Spleen (tissue), 13 donors: ENCODE measurements at regions of chrX and their contacts with region 1.

Region 1: GRCh38 chrX:133670383-133670782 is 255.1 kb upstream of the GPC4 start:
- DNase-seq: no peak
- H3K4me3 ChIP-seq: no peak overlapping the region
- H3K27ac ChIP-seq: no peak overlapping the region
- H3K4me1 ChIP-seq: no peaks in the 10 kb centered on the region
- H3K27me3 ChIP-seq: no peaks in the 10 kb centered on the region
- CTCF ChIP-seq: peak in 10 of 11 experiments; percentile 32 to 65 (median 54)
- POLR2A ChIP-seq: no peak

Region 2: GRCh38 chrX:133335027-133335426 is 335.4 kb before region 1 on chrX:
- intact Hi-C with region 1: loop called (anchors 10 kb)
- DNase-seq: no peak
- H3K4me3 ChIP-seq: no peak overlapping the region
- H3K27ac ChIP-seq: no peak overlapping the region
- H3K4me1 ChIP-seq: no peaks in the 10 kb centered on the region
- H3K27me3 ChIP-seq: no peaks in the 10 kb centered on the region
- CTCF ChIP-seq: peak in 6 of 11 experiments; percentile 10 to 48 (median 30)
- POLR2A ChIP-seq: no peak